CD8-positive, alpha-beta T cell (primary cell): ENCODE measurements at regions of chr11 and their contacts with region 1.

Region 1: DNA sequence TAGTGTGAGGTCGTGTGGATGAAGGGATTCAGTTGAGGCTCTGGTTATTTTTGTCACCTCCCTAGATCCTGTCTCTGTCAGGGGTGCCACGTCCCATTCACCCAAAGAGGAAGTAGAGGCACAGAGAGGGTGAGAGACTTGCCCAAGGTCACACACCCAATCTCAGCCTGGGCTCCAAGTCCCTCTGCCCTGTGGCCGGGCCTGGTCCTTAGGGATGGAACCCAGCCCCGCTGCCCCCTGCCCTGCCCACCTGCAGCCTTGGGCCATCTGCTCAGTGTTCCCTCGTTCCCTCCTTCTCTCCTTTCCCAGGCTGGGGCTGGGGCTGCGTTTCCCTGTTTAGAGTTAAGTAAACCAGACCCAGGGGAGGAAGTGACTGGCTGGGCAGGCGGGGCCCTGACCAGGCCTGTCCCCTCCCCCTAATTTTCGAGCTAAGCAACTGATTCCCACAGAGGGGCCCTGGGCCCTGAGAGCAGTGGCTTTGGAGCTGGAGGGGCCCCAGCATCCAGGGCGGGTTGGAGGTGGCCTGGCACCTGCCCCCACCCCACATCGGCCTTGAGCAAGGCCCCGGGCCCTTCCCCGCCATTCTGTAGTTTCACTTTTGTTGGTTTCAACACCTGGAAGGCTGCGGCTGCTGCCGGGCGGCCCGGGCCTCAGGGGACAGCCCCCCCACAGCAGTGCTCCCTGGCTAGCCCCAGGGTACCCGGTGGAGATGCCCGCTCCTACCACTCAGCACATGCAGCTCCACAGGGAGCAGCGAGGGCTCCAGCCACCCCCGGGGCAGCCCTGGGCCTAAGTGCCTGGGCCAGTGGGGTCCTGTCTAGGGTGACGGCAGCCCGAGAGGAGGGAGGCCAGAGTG is 1.5 kb downstream of the TCIRG1 start:
- DNase-seq: peak in 7 of 9 experiments; percentile 17 to 72 (median 52)
- ATAC-seq: peak; percentile 59
- H3K4me3 ChIP-seq: peak overlapping the region; percentile 86 to 90
- H3K4me3 Mint-ChIP-seq: peak overlapping the region; percentile 86
- H3K27ac ChIP-seq: peak overlapping the region; percentile 73 to 90
- H3K27ac Mint-ChIP-seq: peak overlapping the region; percentile 93
- H3K4me1 ChIP-seq: peaks cover 54% of the 10 kb centered on the region
- H3K4me1 Mint-ChIP-seq: peaks cover 28% of the 10 kb centered on the region
- H3K27me3 ChIP-seq: no peaks in the 10 kb centered on the region
- H3K27me3 Mint-ChIP-seq: no peaks in the 10 kb centered on the region
- CTCF ChIP-seq: no peak

Region 2: DNA sequence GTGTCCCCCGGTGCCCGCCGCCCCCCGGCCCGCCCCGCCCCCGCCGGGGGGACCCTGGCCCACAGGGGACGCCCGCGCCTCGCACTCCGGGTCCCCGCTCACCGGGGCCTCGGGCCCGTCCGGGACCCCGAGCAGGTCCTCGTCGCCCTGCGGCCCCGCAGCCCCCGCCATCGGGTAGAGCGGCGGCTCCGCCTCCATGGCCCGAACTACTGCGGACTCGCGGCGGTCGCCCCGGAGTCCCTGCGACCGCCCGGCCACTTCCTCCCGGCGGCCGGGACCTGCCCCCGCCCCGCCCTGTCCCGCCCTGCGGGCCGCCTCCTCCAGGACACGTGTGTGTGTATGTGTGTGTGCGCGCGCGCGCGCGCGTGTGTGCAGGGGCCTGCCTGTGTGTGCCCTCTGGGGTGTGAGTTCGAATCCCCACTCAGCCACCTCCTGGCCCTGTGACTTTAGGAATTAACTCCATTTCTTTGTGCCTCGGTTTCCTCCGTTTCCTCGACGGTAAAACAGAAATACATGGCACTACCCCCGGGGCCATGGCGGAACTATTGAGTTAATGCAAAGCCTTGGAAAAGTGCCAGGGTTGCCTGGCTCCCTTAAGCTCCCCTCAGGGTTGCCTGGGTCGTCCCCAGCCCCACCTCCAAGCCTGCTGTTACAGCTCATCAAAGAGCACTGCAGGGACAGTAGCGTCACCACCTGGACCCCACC is 36.3 kb before region 1 on chr11 and contains the start of gene UNC93B1:
- CTCF ChIA-PET with region 1: no interaction called
- POLR2A ChIA-PET with region 1: interaction called, 6 read pairs
- intact Hi-C with region 1: loop called in 1 of 2 experiments (anchors 5 kb)
- DNase-seq: peak; percentile 54 to 88 (median 77)
- ATAC-seq: peak; percentile 79
- H3K4me3 ChIP-seq: peak within 1 kb of the TSS; percentile 54 to 59
- H3K4me3 Mint-ChIP-seq: peak within 1 kb of the TSS; percentile 85
- H3K27ac ChIP-seq: peak within 1 kb of the TSS in 1 of 2 experiments; percentile 36
- H3K27ac Mint-ChIP-seq: peak within 1 kb of the TSS; percentile 72
- H3K4me1 ChIP-seq: peaks cover 7% of the 10 kb centered on the region
- H3K4me1 Mint-ChIP-seq: peaks cover 19% of the 10 kb centered on the region
- H3K27me3 ChIP-seq: no peaks in the 10 kb centered on the region
- H3K27me3 Mint-ChIP-seq: no peaks in the 10 kb centered on the region
- CTCF ChIP-seq: no peak
- total RNA-seq, gene UNC93B1: 14.4 to 15.6 TPM